ENCODE measurements at regions of chr4 and their contacts with region 1.

Region 1: GRCh38 chr4:151304755-151305154 is 20.6 kb downstream of the SH3D19 start:
- DNase-seq: no peak
- H3K4me3 ChIP-seq: no peak overlapping the region
- H3K27ac ChIP-seq: no peak overlapping the region
- H3K4me1 ChIP-seq: peaks cover 4 to 7% (median 4%) of the 10 kb centered on the region in 4 experiments
- H3K27me3 ChIP-seq: no peaks in the 10 kb centered on the region
- CTCF ChIP-seq: peak in 1 of 3 experiments; percentile 10; a peak in 1 of 4 replicates
- EP300 ChIP-seq: no peak
- POLR2A ChIP-seq: no peak
- RAD21 ChIP-seq: no peak; a peak in 1 of 4 replicates

Region 2: GRCh38 chr4:151315212-151315886 is 10.6 kb after region 1 on chr4:
- CTCF ChIA-PET with region 1: interaction called, 10 read pairs
- POLR2A ChIA-PET with region 1: interaction called, 6 read pairs
- DNase-seq: no peak
- H3K4me3 ChIP-seq: no peak overlapping the region
- H3K27ac ChIP-seq: no peak overlapping the region
- H3K4me1 ChIP-seq: peaks cover 0 to 7% (median 2%) of the 10 kb centered on the region in 4 experiments; a peak in 2 of 7 replicates
- H3K27me3 ChIP-seq: no peaks in the 10 kb centered on the region
- CTCF ChIP-seq: no peak
- EP300 ChIP-seq: no peak
- POLR2A ChIP-seq: no peak
- RAD21 ChIP-seq: no peak

Region 3: GRCh38 chr4:151434183-151434860 is 129.6 kb after region 1 on chr4:
- CTCF ChIA-PET with region 1: no interaction called
- POLR2A ChIA-PET with region 1: no interaction called
- DNase-seq: no peak
- H3K4me3 ChIP-seq: no peak overlapping the region
- H3K27ac ChIP-seq: no peak overlapping the region
- H3K4me1 ChIP-seq: peaks cover 2 to 15% (median 12%) of the 10 kb centered on the region in 4 experiments; a peak in 4 of 7 replicates
- H3K27me3 ChIP-seq: no peaks in the 10 kb centered on the region
- CTCF ChIP-seq: no peak
- EP300 ChIP-seq: no peak
- POLR2A ChIP-seq: no peak
- RAD21 ChIP-seq: no peak

Measured in H1 (cell line).